Caco-2 (cell line): ENCODE measurements at regions of chr1 and their contacts with region 1.

Region 1: GRCh38 chr1:234610348-234611152 is 572 bp upstream of the IRF2BP2 start:
- DNase-seq: peak; percentile 95 to 97
- H3K4me3 ChIP-seq: peak overlapping the region; percentile 82
- H3K4me3 Mint-ChIP-seq: peak overlapping the region; percentile 92
- H3K27ac Mint-ChIP-seq: peak overlapping the region; percentile 98
- H3K4me1 ChIP-seq: peaks cover 23% of the 10 kb centered on the region
- H3K4me1 Mint-ChIP-seq: peaks cover 40% of the 10 kb centered on the region
- H3K27me3 ChIP-seq: no peaks in the 10 kb centered on the region
- H3K27me3 Mint-ChIP-seq: no peaks in the 10 kb centered on the region
- CTCF ChIP-seq: peak in 1 of 2 experiments; percentile 3

Region 2: DNA sequence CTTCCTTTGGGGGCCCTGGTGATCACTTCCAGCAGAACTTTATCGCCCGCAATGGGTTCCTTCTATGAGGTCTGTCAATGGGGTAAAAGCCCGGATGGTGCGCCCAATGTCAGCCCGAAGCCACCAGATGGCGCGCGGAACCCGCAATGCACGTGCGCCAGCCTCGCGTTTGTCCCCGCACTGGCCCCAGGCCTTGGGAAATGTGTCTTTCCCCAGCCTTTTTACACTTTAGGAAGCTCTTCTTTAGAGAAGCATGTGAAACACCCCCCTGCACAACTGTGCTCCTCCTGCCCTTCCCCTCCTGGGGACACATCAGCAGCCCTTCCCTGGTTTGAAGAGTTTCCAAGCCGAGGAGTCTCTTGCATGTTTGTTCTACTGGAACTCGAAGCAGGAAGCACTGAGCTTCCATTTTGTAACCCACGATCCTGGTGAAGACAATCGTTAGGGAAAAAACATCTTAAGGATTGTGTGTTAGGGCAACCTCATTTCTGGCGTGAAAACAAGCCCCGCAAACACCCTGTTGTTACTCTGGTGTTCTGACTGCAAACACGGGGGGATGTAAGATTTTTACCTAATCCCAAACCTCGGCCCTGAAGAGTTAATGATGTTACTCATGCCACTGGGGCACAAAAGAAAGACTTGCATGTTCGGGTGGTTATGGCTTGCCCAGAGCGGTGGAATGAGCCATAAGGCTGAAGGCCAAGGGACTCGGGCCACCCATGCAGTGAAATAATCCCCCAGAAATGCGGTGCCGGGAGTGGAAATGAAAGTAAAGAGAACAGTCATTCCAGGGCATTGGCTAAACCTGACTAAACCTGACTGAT is 111.2 kb before region 1 on chr1:
- CTCF ChIA-PET with region 1: interaction called, 6 read pairs
- POLR2A ChIA-PET with region 1: interaction called, 5 read pairs
- intact Hi-C with region 1: loop called (anchors 1 kb)
- DNase-seq: peak; percentile 81 to 91
- H3K4me3 ChIP-seq: no peak overlapping the region
- H3K4me3 Mint-ChIP-seq: no peak overlapping the region
- H3K27ac Mint-ChIP-seq: peak overlapping the region; percentile 96
- H3K4me1 ChIP-seq: peaks cover 11% of the 10 kb centered on the region
- H3K4me1 Mint-ChIP-seq: peaks cover 18% of the 10 kb centered on the region
- H3K27me3 ChIP-seq: no peaks in the 10 kb centered on the region
- H3K27me3 Mint-ChIP-seq: no peaks in the 10 kb centered on the region
- CTCF ChIP-seq: peak; percentile 96

Region 3: GRCh38 chr1:234638832-234639799 is 28.6 kb after region 1 on chr1:
- CTCF ChIA-PET with region 1: interaction called, 3 read pairs
- POLR2A ChIA-PET with region 1: interaction called, 19 read pairs
- intact Hi-C with region 1: loop called (anchors 1 kb)
- DNase-seq: peak; percentile 90 to 93
- H3K4me3 ChIP-seq: no peak overlapping the region
- H3K4me3 Mint-ChIP-seq: peak overlapping the region; percentile 59
- H3K27ac Mint-ChIP-seq: peak overlapping the region; percentile 82
- H3K4me1 ChIP-seq: peaks cover 57% of the 10 kb centered on the region
- H3K4me1 Mint-ChIP-seq: peaks cover 42% of the 10 kb centered on the region
- H3K27me3 ChIP-seq: no peaks in the 10 kb centered on the region
- H3K27me3 Mint-ChIP-seq: no peaks in the 10 kb centered on the region
- CTCF ChIP-seq: no peak

Region 4: GRCh38 chr1:234722904-234723720 is 112.6 kb after region 1 on chr1:
- CTCF ChIA-PET with region 1: interaction called, 7 read pairs
- POLR2A ChIA-PET with region 1: interaction called, 72 read pairs
- intact Hi-C with region 1: loop called (anchors 1 kb)
- DNase-seq: no peak
- H3K4me3 ChIP-seq: no peak overlapping the region
- H3K4me3 Mint-ChIP-seq: peak overlapping the region; percentile 64
- H3K27ac Mint-ChIP-seq: peak overlapping the region; percentile 86
- H3K4me1 ChIP-seq: peaks cover 93% of the 10 kb centered on the region
- H3K4me1 Mint-ChIP-seq: peaks cover 69% of the 10 kb centered on the region
- H3K27me3 ChIP-seq: no peaks in the 10 kb centered on the region
- H3K27me3 Mint-ChIP-seq: no peaks in the 10 kb centered on the region
- CTCF ChIP-seq: no peak

Region 5: GRCh38 chr1:234875953-234876855 is 265.7 kb after region 1 on chr1:
- CTCF ChIA-PET with region 1: no interaction called
- POLR2A ChIA-PET with region 1: interaction called, 4 read pairs
- intact Hi-C with region 1: loop called (anchors 5 kb)
- DNase-seq: peak; percentile 84 to 87
- H3K4me3 ChIP-seq: no peak overlapping the region
- H3K4me3 Mint-ChIP-seq: no peak overlapping the region
- H3K27ac Mint-ChIP-seq: peak overlapping the region; percentile 58
- H3K4me1 ChIP-seq: peaks cover 44% of the 10 kb centered on the region
- H3K4me1 Mint-ChIP-seq: peaks cover 35% of the 10 kb centered on the region
- H3K27me3 ChIP-seq: no peaks in the 10 kb centered on the region
- H3K27me3 Mint-ChIP-seq: no peaks in the 10 kb centered on the region
- CTCF ChIP-seq: no peak

Region 6: DNA sequence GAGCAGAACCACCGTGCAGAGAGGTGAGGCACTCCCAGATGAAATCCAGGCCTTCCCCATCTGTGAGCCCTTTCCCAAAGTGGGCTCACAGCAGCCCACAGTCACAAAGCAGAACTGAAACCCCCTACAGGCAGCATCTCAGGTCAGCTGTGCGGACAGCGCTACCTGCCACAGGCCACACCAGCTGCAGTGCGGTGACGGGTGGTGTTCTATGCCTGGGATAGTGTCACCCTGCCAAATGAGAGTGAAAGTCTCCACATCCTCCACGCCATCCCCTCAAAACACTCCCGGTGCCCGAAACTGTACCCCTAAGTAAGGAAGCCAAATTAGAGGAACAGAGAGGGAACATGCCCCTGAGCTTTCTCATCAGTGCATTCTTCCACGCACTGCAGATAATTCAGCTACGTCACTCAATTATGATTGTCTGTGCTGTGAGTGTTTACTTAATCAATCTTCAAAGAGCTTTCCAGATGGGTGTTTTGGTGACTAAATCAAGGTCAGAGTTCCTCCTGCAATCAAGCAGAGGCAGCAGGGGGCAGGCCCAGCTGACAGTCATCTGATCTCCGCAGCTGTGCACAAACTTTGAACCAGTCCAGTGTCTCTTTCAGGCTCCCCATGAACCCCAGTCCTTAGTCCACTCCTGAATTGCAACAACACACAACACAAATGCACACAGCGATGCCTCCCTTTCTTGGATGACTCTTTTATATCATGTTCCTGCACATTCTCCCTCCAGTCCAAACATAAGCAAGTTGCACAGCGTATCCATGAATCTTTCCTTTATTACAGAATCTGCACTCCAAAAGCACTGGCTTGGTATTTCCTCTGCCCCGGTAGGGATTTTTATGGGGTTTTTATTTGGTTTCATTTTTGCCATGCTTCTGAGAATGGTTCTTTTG is 368.1 kb after region 1 on chr1:
- CTCF ChIA-PET with region 1: interaction called, 5 read pairs
- POLR2A ChIA-PET with region 1: interaction called, 37 read pairs
- intact Hi-C with region 1: loop called (anchors 1 kb)
- DNase-seq: peak; percentile 71 to 74
- H3K4me3 ChIP-seq: no peak overlapping the region
- H3K4me3 Mint-ChIP-seq: no peak overlapping the region
- H3K27ac Mint-ChIP-seq: peak overlapping the region; percentile 94
- H3K4me1 ChIP-seq: peaks cover 74% of the 10 kb centered on the region
- H3K4me1 Mint-ChIP-seq: peaks cover 66% of the 10 kb centered on the region
- H3K27me3 ChIP-seq: no peaks in the 10 kb centered on the region
- H3K27me3 Mint-ChIP-seq: no peaks in the 10 kb centered on the region
- CTCF ChIP-seq: peak; percentile 9 to 20

Region 7: DNA sequence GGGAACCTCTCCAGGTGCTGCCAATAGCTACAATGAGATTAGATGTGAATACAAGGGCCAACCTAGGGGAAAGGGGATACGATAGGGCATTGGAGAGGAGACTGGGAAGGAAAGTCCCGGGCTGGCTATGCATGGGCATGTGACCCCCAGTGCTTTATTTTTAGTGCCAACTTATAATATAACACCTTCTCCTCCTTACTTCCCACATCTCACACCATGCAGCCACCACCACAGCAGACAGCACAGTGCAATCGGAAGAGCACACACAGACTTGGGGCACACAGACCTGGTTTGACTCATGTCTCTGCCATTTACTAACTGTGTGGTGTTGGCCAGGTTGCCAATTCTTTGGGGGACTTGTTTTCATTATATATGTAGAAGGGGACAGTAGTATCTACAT is 432.7 kb after region 1 on chr1:
- CTCF ChIA-PET with region 1: no interaction called
- POLR2A ChIA-PET with region 1: no interaction called
- intact Hi-C with region 1: no loop called
- DNase-seq: no peak
- H3K4me3 ChIP-seq: no peak overlapping the region
- H3K4me3 Mint-ChIP-seq: no peak overlapping the region
- H3K27ac Mint-ChIP-seq: no peak overlapping the region
- H3K4me1 ChIP-seq: no peaks in the 10 kb centered on the region
- H3K4me1 Mint-ChIP-seq: no peaks in the 10 kb centered on the region
- H3K27me3 ChIP-seq: no peaks in the 10 kb centered on the region
- H3K27me3 Mint-ChIP-seq: no peaks in the 10 kb centered on the region
- CTCF ChIP-seq: no peak